Prostate gland (tissue), 2 donors: ENCODE measurements at regions of chr12 and their contacts with region 1.

Region 1: DNA sequence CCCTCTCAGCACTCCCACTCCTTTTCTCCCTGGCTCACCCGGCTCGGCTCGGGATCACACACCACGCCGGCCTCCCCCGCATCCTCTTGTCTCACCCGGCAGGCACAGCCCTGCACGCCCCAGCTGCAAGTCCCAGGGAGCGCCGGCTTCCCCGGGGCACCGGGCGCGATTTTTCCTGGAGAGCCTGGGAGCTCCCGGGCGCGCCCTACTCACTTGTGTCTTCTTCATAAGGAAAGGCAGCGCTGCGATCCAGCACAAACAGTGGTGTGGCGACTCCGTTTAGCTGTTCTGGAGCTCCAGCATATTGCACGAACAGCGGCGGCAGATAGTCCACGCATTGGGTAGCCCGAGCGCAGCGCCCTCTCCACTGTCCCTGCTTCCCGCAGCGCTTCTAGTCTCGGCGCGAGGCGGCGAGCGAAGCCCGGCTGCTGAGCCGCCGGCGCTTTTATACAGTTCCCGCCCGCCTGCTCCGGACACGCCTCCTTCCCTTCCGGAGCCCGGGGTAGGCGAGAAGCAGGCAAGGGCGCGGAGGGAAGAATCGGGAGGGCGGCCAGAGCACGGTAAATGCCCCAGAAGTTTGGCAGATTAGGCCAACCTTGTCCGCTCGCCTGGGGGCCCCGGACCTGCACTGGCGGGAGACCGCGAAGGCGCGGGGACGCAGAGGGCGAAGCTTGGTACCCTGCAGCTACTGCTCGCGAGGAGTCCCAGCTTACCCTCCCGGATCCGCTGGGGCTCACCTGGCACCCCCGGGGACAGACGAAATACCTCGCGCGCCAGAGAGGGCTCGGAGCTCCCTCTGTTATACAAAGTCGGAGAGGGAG is at the start of gene KITLG:
- DNase-seq: peak; percentile 78
- H3K4me3 ChIP-seq: peak within 1 kb of the TSS; percentile 48 to 51
- H3K27ac ChIP-seq: peak within 1 kb of the TSS; percentile 66 to 74
- H3K4me1 ChIP-seq: no peaks in the 10 kb centered on the region
- H3K27me3 ChIP-seq: no peaks in the 10 kb centered on the region
- CTCF ChIP-seq: peak; percentile 3 to 46 (median 22)
- POLR2A ChIP-seq: peak; percentile 33
- total RNA-seq, gene KITLG: 21.0 to 23.2 TPM

Region 2: DNA sequence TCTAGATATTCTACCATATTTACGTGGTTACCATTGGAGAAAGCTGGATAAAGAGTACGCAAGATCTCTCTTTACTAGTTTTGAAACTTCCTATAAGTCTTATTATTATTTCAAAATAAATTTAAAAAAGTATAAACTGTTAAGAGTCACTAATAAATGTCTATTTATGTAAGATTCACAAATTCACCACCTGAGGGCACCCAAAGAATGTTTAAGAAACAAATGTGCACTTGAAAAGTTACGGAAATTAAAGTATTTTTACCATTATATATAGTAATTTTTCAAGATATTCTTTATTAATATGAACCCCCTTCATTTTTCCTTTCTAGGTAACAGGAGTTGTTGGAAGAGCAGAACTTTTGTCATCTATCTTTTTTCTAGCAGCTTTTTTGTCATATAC is 426.3 kb before region 1 on chr12:
- intact Hi-C with region 1: loop called (anchors 5 kb)
- DNase-seq: no peak
- H3K4me3 ChIP-seq: no peak overlapping the region
- H3K27ac ChIP-seq: no peak overlapping the region
- H3K4me1 ChIP-seq: no peaks in the 10 kb centered on the region
- H3K27me3 ChIP-seq: no peaks in the 10 kb centered on the region
- CTCF ChIP-seq: peak in 3 of 4 experiments; percentile 19 to 40 (median 40)
- POLR2A ChIP-seq: no peak

Region 3: GRCh38 chr12:88266806-88267360 is 313.4 kb before region 1 on chr12:
- intact Hi-C with region 1: loop called (anchors 10 kb)
- DNase-seq: no peak
- H3K4me3 ChIP-seq: no peak overlapping the region
- H3K27ac ChIP-seq: peak overlapping the region in 1 of 2 donors; percentile 29
- H3K4me1 ChIP-seq: no peaks in the 10 kb centered on the region
- H3K27me3 ChIP-seq: no peaks in the 10 kb centered on the region
- CTCF ChIP-seq: no peak
- POLR2A ChIP-seq: no peak

Region 4: GRCh38 chr12:88553941-88554658 is 26.2 kb before region 1 on chr12:
- intact Hi-C with region 1: no loop called
- DNase-seq: peak; percentile 73
- H3K4me3 ChIP-seq: no peak overlapping the region
- H3K27ac ChIP-seq: peak overlapping the region in 1 of 2 donors; percentile 26
- H3K4me1 ChIP-seq: peaks cover 5% of the 10 kb centered on the region
- H3K27me3 ChIP-seq: no peaks in the 10 kb centered on the region
- CTCF ChIP-seq: no peak
- POLR2A ChIP-seq: no peak

Region 5: GRCh38 chr12:88833641-88834116 is 253.4 kb after region 1 on chr12:
- intact Hi-C with region 1: loop called (anchors 10 kb)
- DNase-seq: no peak
- H3K4me3 ChIP-seq: no peak overlapping the region
- H3K27ac ChIP-seq: no peak overlapping the region
- H3K4me1 ChIP-seq: no peaks in the 10 kb centered on the region
- H3K27me3 ChIP-seq: no peaks in the 10 kb centered on the region
- CTCF ChIP-seq: no peak
- POLR2A ChIP-seq: no peak

Region 6: DNA sequence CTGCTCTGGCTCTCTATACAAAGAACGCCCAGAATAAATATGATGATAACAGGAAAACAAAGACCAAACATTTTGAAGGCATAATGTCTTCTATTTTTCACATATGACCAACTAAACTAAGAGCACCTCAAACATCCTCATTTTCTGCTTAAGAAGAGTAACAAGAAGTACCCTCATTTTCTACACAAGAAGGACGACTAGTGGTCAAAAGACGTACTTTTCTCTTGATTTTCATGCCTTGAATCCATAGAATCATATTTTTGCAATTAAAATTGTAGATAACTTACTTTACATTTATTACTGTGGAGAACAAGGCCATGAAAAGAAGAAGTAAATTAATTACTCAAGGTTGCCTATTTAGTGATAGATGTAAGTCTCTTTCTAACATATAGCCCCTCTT is 413.4 kb after region 1 on chr12:
- intact Hi-C with region 1: loop called (anchors 2 kb)
- DNase-seq: peak; percentile 5
- H3K4me3 ChIP-seq: no peak overlapping the region
- H3K27ac ChIP-seq: no peak overlapping the region
- H3K4me1 ChIP-seq: no peaks in the 10 kb centered on the region
- H3K27me3 ChIP-seq: no peaks in the 10 kb centered on the region
- CTCF ChIP-seq: peak in 3 of 4 experiments; percentile 59 to 76 (median 70)
- POLR2A ChIP-seq: no peak